ENCODE measurements at regions of chr7 and their contacts with region 1.

Region 1: DNA sequence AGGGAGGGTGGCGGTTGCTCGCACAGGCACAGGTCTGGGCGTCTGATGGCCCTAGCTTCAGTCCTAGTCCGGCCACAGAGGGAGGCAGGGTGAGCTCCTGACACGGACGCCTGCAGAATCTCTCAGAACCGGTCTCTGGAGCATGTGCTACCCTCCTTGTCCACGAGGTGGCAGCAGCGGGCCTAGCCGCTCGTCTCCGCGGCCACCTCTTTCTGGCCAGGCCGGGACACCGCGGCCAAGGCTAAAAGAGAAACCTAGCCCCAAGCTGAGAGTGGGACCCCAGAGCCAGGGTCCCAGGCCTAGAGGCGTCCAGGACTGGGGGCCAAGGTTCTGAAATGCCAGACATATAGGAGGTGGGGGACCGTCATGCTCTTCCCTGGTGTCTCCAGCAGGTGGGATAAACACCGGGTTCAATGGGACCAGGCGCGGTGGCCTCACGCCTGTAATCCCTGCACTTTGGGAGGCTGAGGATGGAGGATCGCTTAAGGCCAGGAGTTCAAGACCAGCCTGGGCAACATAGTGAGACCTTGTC is 3.2 kb upstream of the LAT2 start:
- DNase-seq: peak; percentile 94
- H3K4me3 ChIP-seq: no peak overlapping the region
- H3K27ac ChIP-seq: no peak overlapping the region
- H3K4me1 ChIP-seq: peaks cover 0 to 4% of the 10 kb centered on the region in 2 experiments; a peak in 3 of 4 replicates
- H3K27me3 ChIP-seq: no peaks in the 10 kb centered on the region
- CTCF ChIP-seq: peak; percentile 100
- EP300 ChIP-seq: no peak
- RAD21 ChIP-seq: peak; percentile 91

Region 2: GRCh38 chr7:73690646-73691045 is 516.0 kb before region 1 on chr7:
- CTCF ChIA-PET with region 1: no interaction called
- POLR2A ChIA-PET with region 1: no interaction called
- DNase-seq: no peak
- H3K4me3 ChIP-seq: no peak overlapping the region
- H3K27ac ChIP-seq: no peak overlapping the region
- H3K4me1 ChIP-seq: no peaks in the 10 kb centered on the region
- H3K27me3 ChIP-seq: no peaks in the 10 kb centered on the region
- CTCF ChIP-seq: no peak
- EP300 ChIP-seq: no peak
- RAD21 ChIP-seq: no peak

Region 3: DNA sequence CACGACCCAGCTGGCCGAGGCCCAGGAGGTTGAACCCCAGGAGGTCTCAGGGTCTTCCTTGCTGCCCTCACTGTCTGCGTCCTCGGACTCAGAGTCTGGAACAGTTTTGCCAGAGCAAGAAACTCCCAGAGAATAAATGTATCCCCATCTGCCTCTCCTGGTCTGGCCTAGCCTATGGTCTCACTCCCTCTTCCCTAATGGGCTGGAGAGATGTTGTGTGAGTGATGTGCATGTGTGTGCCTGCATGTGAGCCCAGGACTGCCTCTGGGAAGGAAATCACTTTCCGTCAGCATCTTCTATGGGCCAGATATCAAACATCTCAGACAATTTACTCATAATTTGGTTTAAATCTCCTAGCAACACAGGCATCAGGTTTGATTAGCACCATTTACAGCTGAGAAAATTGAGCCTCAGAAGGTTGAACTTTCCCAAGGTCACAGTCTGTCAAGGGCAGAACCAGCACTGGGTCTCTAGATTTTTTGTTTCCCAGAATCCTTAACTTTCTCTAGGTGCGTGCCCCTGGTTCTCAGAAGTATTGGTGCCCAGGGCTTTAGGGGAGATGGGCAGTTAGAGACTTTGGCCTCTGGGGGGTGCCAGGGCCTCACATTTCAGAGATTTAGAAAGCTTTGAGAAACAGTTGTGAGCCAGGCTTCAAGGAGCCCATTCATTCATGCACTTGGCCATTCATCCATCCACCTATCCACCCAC is 340.8 kb before region 1 on chr7:
- CTCF ChIA-PET with region 1: interaction called, 22 read pairs
- POLR2A ChIA-PET with region 1: no interaction called
- DNase-seq: peak; percentile 85
- H3K4me3 ChIP-seq: no peak overlapping the region
- H3K27ac ChIP-seq: peak overlapping the region in 1 of 2 experiments; percentile 91; a peak in 2 of 4 replicates
- H3K4me1 ChIP-seq: peaks cover 0 to 35% of the 10 kb centered on the region in 2 experiments; a peak in 1 of 4 replicates
- H3K27me3 ChIP-seq: no peaks in the 10 kb centered on the region
- CTCF ChIP-seq: peak; percentile 95
- EP300 ChIP-seq: peak in 1 of 2 experiments; percentile 62; a peak in 1 of 4 replicates
- RAD21 ChIP-seq: peak; percentile 96

Region 4: DNA sequence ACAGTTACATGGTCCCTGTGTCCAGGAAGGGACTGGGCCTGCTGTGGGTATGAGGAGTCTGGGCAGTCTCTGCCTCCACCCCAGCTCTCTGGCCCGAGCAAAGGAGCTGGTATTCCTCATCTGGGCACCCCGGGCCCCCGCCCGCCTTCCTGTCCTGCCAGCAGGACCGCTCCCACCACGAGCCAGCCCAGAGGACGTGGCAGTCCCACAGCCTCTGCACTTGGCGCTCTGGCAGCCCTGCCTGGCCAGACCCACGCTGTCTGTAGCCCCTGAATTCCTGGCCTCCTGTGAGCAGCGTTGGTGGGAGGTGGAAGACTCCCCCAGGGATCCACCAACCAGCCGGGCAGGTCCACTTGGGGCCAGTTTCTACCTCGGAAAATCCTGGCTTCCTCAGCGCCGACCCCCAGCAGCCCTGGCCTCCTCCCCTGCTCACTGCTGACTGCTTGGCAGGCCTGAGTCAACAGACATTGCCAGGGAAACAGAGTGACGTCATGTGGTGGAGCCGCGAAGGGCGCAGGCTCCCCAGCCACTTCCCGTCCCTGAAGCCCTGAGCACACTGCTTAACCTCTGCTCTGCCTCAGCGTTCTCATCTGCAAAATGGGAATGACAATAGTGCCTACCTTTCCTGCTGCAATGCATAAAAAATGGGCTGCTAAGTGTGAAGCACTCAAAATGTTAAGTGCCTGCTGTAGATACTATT is 144.7 kb before region 1 on chr7:
- CTCF ChIA-PET with region 1: interaction called, 54 read pairs
- POLR2A ChIA-PET with region 1: no interaction called
- DNase-seq: peak; percentile 79
- H3K4me3 ChIP-seq: 0 out of 4 replicates have a peak overlapping the region, but pooled peaks of 1 of the 2 experiments have one; percentile 5
- H3K27ac ChIP-seq: peak overlapping the region in 1 of 2 experiments; percentile 87; a peak in 2 of 4 replicates
- H3K4me1 ChIP-seq: no peaks in the 10 kb centered on the region
- H3K27me3 ChIP-seq: no peaks in the 10 kb centered on the region
- CTCF ChIP-seq: no peak
- EP300 ChIP-seq: no peak
- RAD21 ChIP-seq: no peak

Region 5: DNA sequence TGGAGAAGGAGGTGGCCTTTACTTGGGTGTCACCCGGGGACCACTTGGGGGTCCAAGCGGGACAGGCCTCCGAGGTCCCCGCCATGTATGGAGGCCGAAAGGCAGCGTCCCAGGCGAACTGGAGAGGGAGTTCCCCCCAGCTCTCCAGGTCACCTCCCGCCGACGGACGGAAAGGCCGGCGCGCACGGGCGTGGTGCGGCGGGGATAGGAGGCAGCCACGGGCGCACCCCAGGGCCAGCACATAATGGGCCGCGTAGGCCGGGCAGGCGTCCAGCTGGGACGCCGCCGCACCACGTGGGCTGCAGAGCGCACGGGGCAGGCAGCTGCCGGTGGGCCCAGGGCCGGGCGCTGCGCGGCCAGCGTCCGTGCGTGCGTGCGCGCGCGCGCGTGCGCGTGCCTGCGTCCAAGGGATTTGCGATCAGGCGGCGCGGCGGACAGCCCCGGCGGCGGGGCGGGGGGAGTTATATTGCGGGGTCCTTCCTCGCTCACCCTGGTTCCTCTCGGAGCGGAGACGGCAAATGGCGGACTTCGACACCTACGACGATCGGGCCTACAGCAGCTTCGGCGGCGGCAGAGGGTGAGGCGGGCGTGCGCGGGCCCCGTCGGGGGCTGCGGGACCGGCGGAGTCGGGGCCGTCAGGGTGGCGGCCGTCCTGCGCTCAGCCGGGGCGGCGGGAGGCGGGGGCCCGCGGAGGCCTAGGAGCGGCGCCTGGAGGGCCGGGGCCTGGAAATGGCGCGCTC is 32.6 kb before region 1 on chr7 and contains the start of gene EIF4H:
- CTCF ChIA-PET with region 1: interaction called, 50 read pairs
- POLR2A ChIA-PET with region 1: interaction called, 6 read pairs
- DNase-seq: peak; percentile 100
- H3K4me3 ChIP-seq: peak within 1 kb of the TSS; percentile 72 to 88
- H3K27ac ChIP-seq: peak within 1 kb of the TSS; percentile 76 to 84
- H3K4me1 ChIP-seq: peaks cover 11 to 24% of the 10 kb centered on the region in 2 experiments; a peak in 3 of 4 replicates
- H3K27me3 ChIP-seq: no peaks in the 10 kb centered on the region
- CTCF ChIP-seq: no peak
- EP300 ChIP-seq: peak in 1 of 2 experiments; percentile 38; a peak in 1 of 4 replicates
- RAD21 ChIP-seq: 0 out of 2 replicates have a peak, but pooled peaks have one; percentile 10
- polyA plus RNA-seq, gene EIF4H: 443 and 468 TPM in 2 replicates

Region 6: GRCh38 chr7:74226633-74227032 is 20.0 kb after region 1 on chr7:
- CTCF ChIA-PET with region 1: interaction called, 46 read pairs
- POLR2A ChIA-PET with region 1: no interaction called
- DNase-seq: no peak
- H3K4me3 ChIP-seq: no peak overlapping the region
- H3K27ac ChIP-seq: no peak overlapping the region
- H3K4me1 ChIP-seq: no peaks in the 10 kb centered on the region
- H3K27me3 ChIP-seq: no peaks in the 10 kb centered on the region
- CTCF ChIP-seq: no peak
- EP300 ChIP-seq: no peak
- RAD21 ChIP-seq: no peak

Region 7: DNA sequence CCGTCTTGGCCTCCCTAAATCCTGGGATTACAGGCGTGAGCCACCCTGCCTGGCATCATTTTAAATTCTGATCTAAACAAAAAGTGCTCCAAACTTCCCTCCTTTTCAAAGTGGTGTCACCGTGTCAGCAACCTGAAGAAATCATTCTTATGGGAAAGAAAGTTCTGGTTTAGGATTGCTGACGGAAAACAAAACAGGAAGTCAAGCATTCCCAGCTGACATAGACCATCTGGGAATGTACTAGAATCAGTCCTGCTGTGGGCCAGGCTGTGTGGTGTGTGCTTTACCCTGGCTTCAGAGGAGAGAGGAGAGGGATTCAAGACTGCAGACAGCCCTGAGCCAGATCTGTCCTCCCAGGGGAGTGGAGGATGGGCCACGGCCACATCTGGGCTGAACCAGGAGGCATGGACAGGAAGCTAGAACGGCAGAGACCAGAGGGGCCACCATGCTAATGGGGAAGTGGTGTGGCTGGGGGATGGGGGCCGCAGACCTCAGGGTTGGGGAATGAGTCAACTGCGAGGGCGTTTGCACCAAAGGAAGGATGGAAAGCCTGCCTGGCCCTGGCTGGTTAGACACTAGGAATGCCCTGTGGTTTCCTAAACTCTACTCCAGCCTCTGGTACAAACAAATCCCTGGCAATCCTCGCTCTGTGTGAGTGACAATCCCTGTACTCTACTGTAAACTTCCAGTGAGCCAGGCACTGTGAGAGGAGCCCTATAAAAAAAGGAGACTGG is 65.8 kb after region 1 on chr7:
- CTCF ChIA-PET with region 1: interaction called, 13 read pairs
- POLR2A ChIA-PET with region 1: no interaction called
- DNase-seq: peak; percentile 68
- H3K4me3 ChIP-seq: no peak overlapping the region
- H3K27ac ChIP-seq: peak overlapping the region; percentile 56 to 99
- H3K4me1 ChIP-seq: peaks cover 4 to 16% of the 10 kb centered on the region in 2 experiments; a peak in 3 of 4 replicates
- H3K27me3 ChIP-seq: no peaks in the 10 kb centered on the region
- CTCF ChIP-seq: no peak
- EP300 ChIP-seq: peak in 1 of 2 experiments; percentile 67; a peak in 2 of 4 replicates
- RAD21 ChIP-seq: no peak

Region 8: GRCh38 chr7:74379938-74380337 is 173.3 kb after region 1 on chr7:
- CTCF ChIA-PET with region 1: interaction called, 27 read pairs
- POLR2A ChIA-PET with region 1: no interaction called
- DNase-seq: peak; percentile 14
- H3K4me3 ChIP-seq: no peak overlapping the region
- H3K27ac ChIP-seq: no peak overlapping the region
- H3K4me1 ChIP-seq: no peaks in the 10 kb centered on the region
- H3K27me3 ChIP-seq: no peaks in the 10 kb centered on the region
- CTCF ChIP-seq: no peak
- EP300 ChIP-seq: no peak
- RAD21 ChIP-seq: no peak

Measured in SK-N-SH (cell line).